CD4-positive, alpha-beta memory T cell (primary cell): ENCODE measurements at regions of chr2 and their contacts with region 1.

Region 1: GRCh38 chr2:230160112-230160660 is 59.6 kb downstream of the SP110 start:
- DNase-seq: peak; percentile 46 to 52 (median 50)
- H3K4me3 ChIP-seq: no peak overlapping the region
- H3K4me3 Mint-ChIP-seq: peak overlapping the region in 2 of 8 donors; percentile 62 to 71
- H3K27ac ChIP-seq: no peak overlapping the region
- H3K27ac Mint-ChIP-seq: peak overlapping the region in 2 of 7 donors; percentile 10 to 42
- H3K4me1 ChIP-seq: peaks cover 7% of the 10 kb centered on the region
- H3K4me1 Mint-ChIP-seq: peaks cover 0 to 6% (median 2%) of the 10 kb centered on the region in 4 donors
- H3K27me3 ChIP-seq: no peaks in the 10 kb centered on the region
- H3K27me3 Mint-ChIP-seq: no peaks in the 10 kb centered on the region

Region 2: DNA sequence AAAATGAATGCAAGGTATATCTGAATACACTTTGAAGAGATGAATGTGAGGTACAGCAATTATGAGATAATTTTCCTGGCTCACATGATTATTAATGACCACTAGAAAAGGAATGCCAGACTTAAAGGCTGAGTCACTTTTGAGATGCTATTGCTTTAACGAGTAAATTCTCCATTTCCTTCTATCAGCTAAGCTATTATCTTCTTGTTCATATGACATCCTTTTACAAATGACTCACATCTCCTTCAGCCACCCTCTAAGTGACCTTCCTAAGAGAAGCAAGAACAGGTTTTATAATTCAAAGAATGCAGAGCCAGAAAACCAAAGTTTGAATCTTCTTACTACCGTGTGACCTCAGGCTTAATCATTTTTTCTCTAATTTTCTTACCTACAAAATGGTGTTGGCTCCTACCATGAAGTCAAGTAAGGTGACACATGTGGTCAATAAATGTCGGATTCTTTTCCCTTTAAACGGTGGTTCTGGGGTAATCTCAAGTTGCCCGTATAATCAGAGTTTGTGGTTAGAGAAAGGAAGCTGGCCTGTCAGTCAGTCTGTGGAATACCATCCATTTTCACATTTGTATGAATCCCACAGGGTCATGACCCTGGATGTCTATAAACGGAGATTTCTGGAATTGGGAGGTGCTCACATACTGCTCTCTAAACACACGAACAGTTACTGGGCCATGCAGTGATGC is 705.1 kb before region 1 on chr2:
- CTCF ChIA-PET with region 1: no interaction called
- POLR2A ChIA-PET with region 1: no interaction called
- intact Hi-C with region 1: no loop called
- DNase-seq: no peak
- H3K4me3 ChIP-seq: no peak overlapping the region
- H3K4me3 Mint-ChIP-seq: no peak overlapping the region
- H3K27ac ChIP-seq: no peak overlapping the region
- H3K27ac Mint-ChIP-seq: peak overlapping the region in 1 of 7 donors; percentile 34
- H3K4me1 ChIP-seq: no peaks in the 10 kb centered on the region
- H3K4me1 Mint-ChIP-seq: no peaks in the 10 kb centered on the region
- H3K27me3 ChIP-seq: no peaks in the 10 kb centered on the region
- H3K27me3 Mint-ChIP-seq: peaks cover 0 to 7% of the 10 kb centered on the region in 2 donors

Region 3: GRCh38 chr2:230007931-230008707 is 152.1 kb before region 1 on chr2:
- CTCF ChIA-PET with region 1: interaction called, 21 read pairs
- POLR2A ChIA-PET with region 1: no interaction called
- intact Hi-C with region 1: no loop called
- DNase-seq: peak; percentile 65 to 73 (median 69)
- H3K4me3 ChIP-seq: no peak overlapping the region
- H3K4me3 Mint-ChIP-seq: peak overlapping the region in 5 of 8 donors; percentile 22 to 57 (median 51)
- H3K27ac ChIP-seq: no peak overlapping the region
- H3K27ac Mint-ChIP-seq: peak overlapping the region in 1 of 7 donors; percentile 9
- H3K4me1 ChIP-seq: no peaks in the 10 kb centered on the region
- H3K4me1 Mint-ChIP-seq: peaks cover 0 to 4% (median 1%) of the 10 kb centered on the region in 4 donors
- H3K27me3 ChIP-seq: no peaks in the 10 kb centered on the region
- H3K27me3 Mint-ChIP-seq: no peaks in the 10 kb centered on the region

Region 4: DNA sequence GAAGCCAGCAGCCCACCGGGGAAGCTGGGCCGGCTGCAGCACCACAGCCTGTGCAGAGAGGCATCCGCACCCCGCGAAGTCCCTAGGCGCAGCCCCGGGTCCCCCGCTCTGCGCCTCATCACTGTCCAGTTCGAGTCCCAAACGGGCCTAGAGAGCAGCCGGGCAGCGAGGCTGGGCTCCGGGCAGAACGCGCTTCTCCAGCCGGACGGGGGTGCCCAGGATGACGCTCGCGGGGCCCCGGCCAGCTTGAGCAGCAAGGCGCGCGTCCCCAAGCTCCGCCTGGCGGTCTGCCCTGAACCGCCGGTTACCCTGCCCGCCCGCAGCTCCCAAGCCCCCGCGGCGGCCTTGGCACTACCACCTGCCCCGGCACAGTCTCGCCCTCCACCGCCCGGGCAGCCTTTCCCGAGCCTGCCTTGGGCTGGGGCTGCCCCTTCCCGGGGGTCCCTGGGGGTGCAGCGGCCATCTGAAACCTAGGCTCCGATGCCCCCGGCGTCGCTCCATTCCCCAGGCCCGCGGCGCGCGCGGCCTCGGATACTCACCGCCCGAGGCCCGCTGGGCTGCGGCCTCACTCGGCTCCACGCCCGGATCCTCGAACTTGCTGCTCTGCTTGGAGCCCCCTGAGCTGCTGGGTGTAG is 92.1 kb before region 1 on chr2:
- CTCF ChIA-PET with region 1: interaction called, 26 read pairs
- POLR2A ChIA-PET with region 1: no interaction called
- intact Hi-C with region 1: no loop called
- DNase-seq: peak in 4 of 5 donors; percentile 22 to 51 (median 32)
- H3K4me3 ChIP-seq: peak overlapping the region in 1 of 2 donors; percentile 70
- H3K4me3 Mint-ChIP-seq: peak overlapping the region; percentile 89 to 94 (median 92)
- H3K27ac ChIP-seq: no peak overlapping the region
- H3K27ac Mint-ChIP-seq: peak overlapping the region in 3 of 7 donors; percentile 12 to 67 (median 30)
- H3K4me1 ChIP-seq: peaks cover 12% of the 10 kb centered on the region
- H3K4me1 Mint-ChIP-seq: peaks cover 8 to 15% (median 10%) of the 10 kb centered on the region in 4 donors
- H3K27me3 ChIP-seq: no peaks in the 10 kb centered on the region
- H3K27me3 Mint-ChIP-seq: peaks cover 4 to 11% of the 10 kb centered on the region in 2 donors

Region 5: GRCh38 chr2:230170532-230170931 is 10.3 kb after region 1 on chr2:
- CTCF ChIA-PET with region 1: interaction called, 42 read pairs
- POLR2A ChIA-PET with region 1: no interaction called
- intact Hi-C with region 1: no loop called
- DNase-seq: peak; percentile 15 to 44 (median 26)
- H3K4me3 ChIP-seq: no peak overlapping the region
- H3K4me3 Mint-ChIP-seq: peak overlapping the region in 5 of 8 donors; percentile 22 to 60 (median 36)
- H3K27ac ChIP-seq: no peak overlapping the region
- H3K27ac Mint-ChIP-seq: peak overlapping the region; percentile 70 to 88 (median 82)
- H3K4me1 ChIP-seq: peaks cover 4% of the 10 kb centered on the region
- H3K4me1 Mint-ChIP-seq: peaks cover 0 to 13% (median 7%) of the 10 kb centered on the region in 4 donors
- H3K27me3 ChIP-seq: no peaks in the 10 kb centered on the region
- H3K27me3 Mint-ChIP-seq: no peaks in the 10 kb centered on the region

Region 6: GRCh38 chr2:230256733-230257332 is 96.6 kb after region 1 on chr2:
- CTCF ChIA-PET with region 1: no interaction called
- POLR2A ChIA-PET with region 1: no interaction called
- intact Hi-C with region 1: no loop called
- DNase-seq: no peak
- H3K4me3 ChIP-seq: no peak overlapping the region
- H3K4me3 Mint-ChIP-seq: peak overlapping the region in 1 of 8 donors; percentile 13
- H3K27ac ChIP-seq: no peak overlapping the region
- H3K27ac Mint-ChIP-seq: peak overlapping the region in 2 of 7 donors; percentile 54 to 55
- H3K4me1 ChIP-seq: peaks cover 50% of the 10 kb centered on the region
- H3K4me1 Mint-ChIP-seq: peaks cover 24 to 35% (median 27%) of the 10 kb centered on the region in 4 donors
- H3K27me3 ChIP-seq: no peaks in the 10 kb centered on the region
- H3K27me3 Mint-ChIP-seq: no peaks in the 10 kb centered on the region

Region 7: GRCh38 chr2:230306474-230306873 is 146.3 kb after region 1 on chr2:
- CTCF ChIA-PET with region 1: no interaction called
- POLR2A ChIA-PET with region 1: no interaction called
- intact Hi-C with region 1: no loop called
- DNase-seq: no peak
- H3K4me3 ChIP-seq: no peak overlapping the region
- H3K4me3 Mint-ChIP-seq: no peak overlapping the region
- H3K27ac ChIP-seq: no peak overlapping the region
- H3K27ac Mint-ChIP-seq: no peak overlapping the region
- H3K4me1 ChIP-seq: no peaks in the 10 kb centered on the region
- H3K4me1 Mint-ChIP-seq: peaks cover 0 to 8% (median 3%) of the 10 kb centered on the region in 4 donors
- H3K27me3 ChIP-seq: no peaks in the 10 kb centered on the region
- H3K27me3 Mint-ChIP-seq: no peaks in the 10 kb centered on the region

Region 8: DNA sequence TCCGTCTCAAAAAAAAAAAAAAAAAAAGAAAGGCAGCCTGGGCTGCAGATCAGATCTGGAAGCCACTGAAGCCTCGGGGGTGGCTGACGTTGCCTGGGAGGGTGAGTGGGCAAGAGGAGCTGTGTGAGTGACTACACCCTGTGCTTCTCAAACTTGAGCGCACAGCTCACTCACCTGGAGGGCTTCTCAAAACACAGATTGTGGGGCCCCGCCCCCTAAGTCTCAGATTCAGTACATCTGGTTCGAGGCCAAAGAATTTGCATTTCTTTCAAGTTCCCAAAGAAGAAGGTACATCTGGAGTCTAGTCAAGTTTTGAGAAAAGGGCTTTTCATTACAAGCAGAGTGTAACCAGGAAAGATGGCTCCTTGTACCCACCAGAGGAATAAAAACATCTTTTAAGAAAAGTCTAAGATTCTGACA is 454.7 kb after region 1 on chr2:
- CTCF ChIA-PET with region 1: interaction called, 10 read pairs
- POLR2A ChIA-PET with region 1: no interaction called
- intact Hi-C with region 1: loop called (anchors 1 kb)
- DNase-seq: no peak
- H3K4me3 ChIP-seq: no peak overlapping the region
- H3K4me3 Mint-ChIP-seq: no peak overlapping the region
- H3K27ac ChIP-seq: no peak overlapping the region
- H3K27ac Mint-ChIP-seq: no peak overlapping the region
- H3K4me1 ChIP-seq: peaks cover 25% of the 10 kb centered on the region
- H3K4me1 Mint-ChIP-seq: peaks cover 9 to 19% (median 16%) of the 10 kb centered on the region in 4 donors
- H3K27me3 ChIP-seq: no peaks in the 10 kb centered on the region
- H3K27me3 Mint-ChIP-seq: no peaks in the 10 kb centered on the region